Activated T-helper 1 cell treated with anti-CD3 and anti-CD28 coated beads, Interleukin-12 subunit alpha, Interleukin-12 subunit beta, Interleukin-2, Interleukin-4 antibody, amounts not matched to agents 30 ng/mL and 10 ng/mL and 1 ng/mL, durations not matched to agents 14 hours and 24 hours and 36 hours (primary cell): ENCODE measurements at regions of chr11 and their contacts with region 1.

Region 1: GRCh38 chr11:108467091-108467823 is at the start of gene C11orf65:
- DNase-seq: peak; percentile 94
- H3K4me3 Mint-ChIP-seq: peak within 1 kb of the TSS; percentile 98
- H3K27ac Mint-ChIP-seq: peak within 1 kb of the TSS; percentile 100
- H3K4me1 Mint-ChIP-seq: peaks cover 23% of the 10 kb centered on the region
- H3K27me3 Mint-ChIP-seq: peaks cover 3% of the 10 kb centered on the region
- total RNA-seq, gene C11orf65: 0.57 and 0.64 TPM in 2 replicates

Region 2: GRCh38 chr11:107858217-107859070 is 608.8 kb before region 1 on chr11 and contains the start of gene SLC35F2:
- intact Hi-C with region 1: loop called (anchors 5 kb)
- DNase-seq: peak; percentile 62
- H3K4me3 Mint-ChIP-seq: peak within 1 kb of the TSS; percentile 95
- H3K27ac Mint-ChIP-seq: peak within 1 kb of the TSS; percentile 83
- H3K4me1 Mint-ChIP-seq: peaks cover 26% of the 10 kb centered on the region
- H3K27me3 Mint-ChIP-seq: peaks cover 8% of the 10 kb centered on the region
- total RNA-seq, gene SLC35F2: 36.5 and 38.0 TPM in 2 replicates

Region 3: GRCh38 chr11:108199446-108200321 is 267.6 kb before region 1 on chr11:
- intact Hi-C with region 1: loop called (anchors 1 kb)
- DNase-seq: peak; percentile 48
- H3K4me3 Mint-ChIP-seq: peak overlapping the region; percentile 34
- H3K27ac Mint-ChIP-seq: peak overlapping the region; percentile 93
- H3K4me1 Mint-ChIP-seq: peaks cover 55% of the 10 kb centered on the region
- H3K27me3 Mint-ChIP-seq: no peaks in the 10 kb centered on the region

Region 4: DNA sequence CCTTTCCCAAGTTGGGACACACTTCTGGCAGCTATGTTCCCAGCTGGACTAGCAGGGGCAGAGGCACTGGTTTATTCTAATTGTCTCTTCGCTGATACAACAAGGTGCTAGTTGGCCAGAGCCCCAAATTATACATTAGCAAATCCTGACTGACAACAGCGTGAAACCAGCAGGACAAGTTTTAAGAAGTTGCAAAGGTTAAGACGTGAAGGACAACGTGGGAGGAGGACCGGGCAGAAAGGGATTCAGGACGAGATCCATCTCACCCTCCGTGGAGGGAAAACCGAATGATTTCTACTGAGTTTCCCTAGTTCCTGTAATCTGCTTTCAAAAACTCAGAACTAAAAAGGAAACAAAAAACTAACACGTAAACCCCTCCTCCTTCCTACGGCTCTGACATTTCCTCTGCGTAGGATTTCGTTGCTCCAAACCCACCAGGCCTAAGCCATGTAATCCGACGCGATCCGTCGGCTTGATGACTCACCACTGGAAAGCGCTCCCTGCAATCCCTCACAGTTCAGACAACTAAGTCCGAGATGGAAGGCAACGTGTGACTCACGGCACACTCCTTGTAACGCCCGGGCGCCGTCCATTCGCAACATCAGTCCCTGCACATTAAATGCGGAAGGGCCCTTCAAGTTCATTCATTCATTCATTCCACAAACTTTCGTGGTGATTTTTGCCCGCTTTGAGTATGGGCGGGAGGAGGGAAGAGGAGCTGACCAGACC is 30.2 kb after region 1 on chr11:
- intact Hi-C with region 1: loop called (anchors 1 kb)
- DNase-seq: peak; percentile 61
- H3K4me3 Mint-ChIP-seq: peak overlapping the region; percentile 90
- H3K27ac Mint-ChIP-seq: peak overlapping the region; percentile 96
- H3K4me1 Mint-ChIP-seq: peaks cover 35% of the 10 kb centered on the region
- H3K27me3 Mint-ChIP-seq: no peaks in the 10 kb centered on the region

Region 5: DNA sequence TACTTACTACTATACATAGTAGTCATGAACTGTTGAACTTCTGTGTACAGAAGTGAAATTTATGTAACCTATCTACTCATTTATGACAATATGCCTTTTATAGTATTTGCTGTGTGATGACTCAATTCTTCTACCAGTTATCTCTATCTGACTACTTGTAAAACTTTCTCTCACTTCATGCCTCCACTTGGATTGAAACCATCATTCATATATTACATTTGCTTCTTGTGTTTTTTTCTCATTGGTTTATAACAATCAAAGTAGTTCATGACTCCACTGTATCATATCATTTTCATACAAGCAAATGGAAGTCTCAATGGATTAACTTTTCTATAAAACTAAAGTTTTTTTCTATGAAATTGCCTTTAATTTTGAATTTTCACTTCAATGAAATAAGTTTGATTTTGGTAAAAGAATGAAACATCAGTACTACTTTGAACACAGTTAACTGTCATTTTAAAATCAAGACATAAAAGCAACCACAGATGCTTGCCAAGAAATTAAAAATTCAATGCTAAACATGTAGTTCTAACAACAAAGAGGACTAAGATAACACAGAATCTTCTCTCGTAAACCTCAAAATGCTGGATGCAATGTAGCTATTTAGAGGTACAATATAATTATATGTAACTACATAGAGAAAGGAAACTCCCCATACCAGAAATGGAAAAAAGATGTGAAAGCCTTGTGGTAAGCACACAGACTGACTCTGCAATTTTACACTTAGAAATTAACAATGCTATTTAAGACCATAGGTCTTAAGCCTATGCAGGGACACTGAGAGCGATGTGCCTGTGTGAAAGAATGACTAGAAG is 153.9 kb after region 1 on chr11:
- intact Hi-C with region 1: loop called (anchors 1 kb)
- DNase-seq: no peak
- H3K4me3 Mint-ChIP-seq: no peak overlapping the region
- H3K27ac Mint-ChIP-seq: no peak overlapping the region
- H3K4me1 Mint-ChIP-seq: peaks cover 18% of the 10 kb centered on the region
- H3K27me3 Mint-ChIP-seq: peaks cover 7% of the 10 kb centered on the region

Region 6: GRCh38 chr11:108664730-108665525 is 197.7 kb after region 1 on chr11 and contains the start of gene DDX10:
- intact Hi-C with region 1: loop called (anchors 1 kb)
- DNase-seq: peak; percentile 98
- H3K4me3 Mint-ChIP-seq: peak within 1 kb of the TSS; percentile 100
- H3K27ac Mint-ChIP-seq: peak within 1 kb of the TSS; percentile 97
- H3K4me1 Mint-ChIP-seq: peaks cover 45% of the 10 kb centered on the region
- H3K27me3 Mint-ChIP-seq: peaks cover 7% of the 10 kb centered on the region
- total RNA-seq, gene DDX10: 68.4 and 68.8 TPM in 2 replicates

Region 7: DNA sequence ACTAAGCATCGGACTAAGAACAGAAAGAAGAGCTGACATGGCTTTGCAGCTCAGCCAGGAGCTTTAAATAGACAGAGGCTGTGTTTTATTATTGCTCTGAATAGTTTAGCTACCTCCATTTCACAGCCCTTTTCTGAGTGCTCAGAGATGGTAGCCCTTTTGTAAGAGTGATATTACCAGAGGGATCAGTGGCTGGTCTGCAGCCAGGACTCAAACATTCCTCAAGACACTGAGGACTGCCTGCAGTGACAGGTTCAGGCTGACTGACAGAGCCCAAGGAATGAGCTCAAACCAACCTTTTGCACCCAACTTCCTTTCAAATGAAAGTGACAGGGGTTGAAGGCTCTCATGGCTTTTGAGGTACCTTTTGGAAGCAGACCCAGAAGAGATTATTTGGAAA is 386.6 kb after region 1 on chr11:
- intact Hi-C with region 1: no loop called
- DNase-seq: no peak
- H3K4me3 Mint-ChIP-seq: peak overlapping the region; percentile 75
- H3K27ac Mint-ChIP-seq: peak overlapping the region; percentile 75
- H3K4me1 Mint-ChIP-seq: peaks cover 19% of the 10 kb centered on the region
- H3K27me3 Mint-ChIP-seq: no peaks in the 10 kb centered on the region